Spleen (tissue), 13 donors: ENCODE measurements at regions of chr18 and their contacts with region 1.

Region 1: DNA sequence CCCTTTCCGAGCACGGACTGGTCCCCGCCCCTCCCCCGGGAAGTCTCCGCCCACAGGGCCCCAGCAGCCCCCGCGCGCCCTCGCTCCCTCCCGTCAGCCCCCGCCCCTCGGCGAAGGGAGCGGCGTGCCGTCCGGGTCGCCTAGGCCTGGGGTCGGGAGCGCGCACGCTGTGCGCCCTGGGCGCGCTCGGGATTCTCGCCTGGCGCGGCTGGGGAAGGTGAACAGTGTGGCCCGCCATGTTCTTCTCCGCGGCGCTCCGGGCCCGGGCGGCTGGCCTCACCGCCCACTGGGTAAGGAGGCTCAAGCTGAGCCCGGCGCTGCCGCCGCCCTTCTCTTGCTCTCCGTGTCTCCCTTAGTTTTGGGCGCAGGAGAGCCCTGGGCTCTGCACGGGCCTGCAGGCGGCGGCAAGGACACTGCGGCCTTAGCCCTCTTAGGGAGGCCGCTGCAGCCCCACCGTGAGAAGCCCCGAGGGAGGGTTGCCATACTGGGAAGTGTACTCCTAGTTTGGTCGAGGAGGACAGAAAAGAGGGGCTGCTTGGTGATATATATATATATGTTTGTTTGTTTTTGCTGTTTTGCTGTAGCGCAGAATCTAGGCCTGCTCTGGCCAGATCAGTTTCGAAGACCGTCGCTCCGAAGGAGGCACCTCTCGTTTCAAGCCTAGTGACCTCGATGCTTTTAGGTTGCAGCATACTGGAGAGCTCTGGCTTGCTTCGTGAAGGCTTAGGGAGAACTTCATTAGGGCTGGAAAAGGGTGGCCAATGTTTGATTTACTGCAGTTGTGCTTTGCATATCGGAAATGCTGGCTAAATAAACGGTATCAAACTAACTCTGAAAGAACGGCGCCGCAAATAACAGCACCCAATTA is at the start of gene NDUFV2:
- DNase-seq: peak; percentile 100
- H3K4me3 ChIP-seq: peak within 1 kb of the TSS; percentile 65 to 78 (median 72)
- H3K27ac ChIP-seq: peak within 1 kb of the TSS; percentile 92 to 98 (median 97)
- H3K4me1 ChIP-seq: peaks cover 39 to 65% (median 53%) of the 10 kb centered on the region in 6 donors
- H3K27me3 ChIP-seq: no peaks in the 10 kb centered on the region
- CTCF ChIP-seq: peak in 3 of 11 experiments; percentile 12 to 35 (median 15)
- POLR2A ChIP-seq: peak in 2 of 3 donors; percentile 62 to 66
- total RNA-seq, gene NDUFV2: 89.8 to 108 (median 92.4) TPM

Region 2: DNA sequence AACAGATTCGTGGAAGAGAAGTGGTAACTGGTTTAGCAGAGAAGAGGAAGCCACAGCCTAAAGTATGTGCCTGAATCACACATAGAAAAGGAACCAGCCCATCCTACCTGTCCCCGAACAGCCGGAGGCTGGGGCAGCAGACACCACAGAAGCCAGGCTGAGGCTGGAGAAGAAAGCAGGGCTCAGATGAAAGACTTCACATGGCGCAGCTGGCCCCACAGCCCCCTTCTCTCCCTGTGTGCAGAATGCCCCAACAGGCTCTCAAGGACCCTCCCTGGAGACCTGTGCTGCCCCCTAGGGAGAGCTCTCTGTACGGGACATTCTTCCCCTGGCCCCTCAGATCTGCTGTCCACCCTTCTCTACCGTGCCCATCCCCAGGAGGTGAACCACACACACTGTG is 577.0 kb before region 1 on chr18:
- intact Hi-C with region 1: no loop called
- DNase-seq: no peak
- H3K4me3 ChIP-seq: no peak overlapping the region
- H3K27ac ChIP-seq: no peak overlapping the region
- H3K4me1 ChIP-seq: no peaks in the 10 kb centered on the region
- H3K27me3 ChIP-seq: peaks cover 0 to 47% (median 7%) of the 10 kb centered on the region in 7 donors
- CTCF ChIP-seq: no peak
- POLR2A ChIP-seq: no peak

Region 3: DNA sequence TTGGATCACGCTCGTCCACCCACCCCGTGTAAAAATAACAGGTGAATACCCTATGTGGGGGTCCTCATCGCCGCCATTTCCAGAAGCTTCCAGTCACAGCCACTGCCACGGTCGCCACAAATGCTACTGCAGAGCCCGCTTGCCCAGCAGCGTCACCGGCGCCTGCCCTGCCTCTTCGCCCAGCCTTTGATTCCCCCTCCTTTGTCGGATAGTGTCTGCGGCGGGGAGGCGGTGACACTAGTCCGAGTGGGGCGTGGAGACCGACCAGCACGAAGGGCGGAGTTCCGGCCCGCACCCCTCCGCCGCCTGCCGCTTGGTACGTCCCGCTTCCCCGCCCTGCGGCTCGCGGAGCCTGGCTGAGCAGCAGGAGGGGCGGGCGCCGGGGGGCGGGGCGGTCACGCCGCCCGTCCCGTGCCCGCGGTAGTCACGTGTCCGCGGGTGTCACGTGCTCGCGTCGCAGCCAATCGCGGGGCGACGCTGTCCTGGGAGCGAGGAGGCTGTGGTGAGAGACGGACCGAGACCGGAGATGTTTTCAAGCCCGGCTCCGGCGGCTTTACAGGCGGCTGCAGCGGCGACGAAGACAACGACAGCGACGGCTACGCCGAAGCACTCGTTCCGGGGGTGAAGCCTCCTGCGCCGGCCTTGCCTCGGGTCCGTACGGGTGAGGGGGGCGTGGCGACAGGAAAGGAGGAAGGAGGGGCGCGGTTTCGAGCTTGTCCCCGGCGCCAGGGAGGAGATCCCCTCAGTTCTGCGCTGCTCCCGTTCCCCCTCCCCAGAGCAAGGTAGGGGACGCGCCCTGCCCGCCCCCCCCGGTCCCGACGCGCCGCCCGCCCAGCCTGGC is 33.8 kb after region 1 on chr18 and contains the start of gene ANKRD12:
- intact Hi-C with region 1: loop called (anchors 5 kb)
- DNase-seq: peak; percentile 100
- H3K4me3 ChIP-seq: peak within 1 kb of the TSS; percentile 48 to 85 (median 72)
- H3K27ac ChIP-seq: peak within 1 kb of the TSS; percentile 99 to 100 (median 99)
- H3K4me1 ChIP-seq: peaks cover 41 to 84% (median 62%) of the 10 kb centered on the region in 6 donors
- H3K27me3 ChIP-seq: no peaks in the 10 kb centered on the region
- CTCF ChIP-seq: peak in 3 of 11 experiments; percentile 5 to 33 (median 10)
- POLR2A ChIP-seq: peak; percentile 63 to 94 (median 80)
- total RNA-seq, gene ANKRD12: 73.2 to 122 (median 100) TPM

Region 4: GRCh38 chr18:9433671-9434121 is 331.0 kb after region 1 on chr18:
- intact Hi-C with region 1: no loop called
- DNase-seq: no peak
- H3K4me3 ChIP-seq: peak overlapping the region in 1 of 8 donors; percentile 9
- H3K27ac ChIP-seq: peak overlapping the region in 3 of 8 donors; percentile 14 to 34 (median 33)
- H3K4me1 ChIP-seq: peaks cover 0 to 18% (median 11%) of the 10 kb centered on the region in 6 donors
- H3K27me3 ChIP-seq: no peaks in the 10 kb centered on the region
- CTCF ChIP-seq: no peak
- POLR2A ChIP-seq: no peak